K562 (cell line): ENCODE measurements at regions of chr5 and their contacts with region 1.

Region 1: DNA sequence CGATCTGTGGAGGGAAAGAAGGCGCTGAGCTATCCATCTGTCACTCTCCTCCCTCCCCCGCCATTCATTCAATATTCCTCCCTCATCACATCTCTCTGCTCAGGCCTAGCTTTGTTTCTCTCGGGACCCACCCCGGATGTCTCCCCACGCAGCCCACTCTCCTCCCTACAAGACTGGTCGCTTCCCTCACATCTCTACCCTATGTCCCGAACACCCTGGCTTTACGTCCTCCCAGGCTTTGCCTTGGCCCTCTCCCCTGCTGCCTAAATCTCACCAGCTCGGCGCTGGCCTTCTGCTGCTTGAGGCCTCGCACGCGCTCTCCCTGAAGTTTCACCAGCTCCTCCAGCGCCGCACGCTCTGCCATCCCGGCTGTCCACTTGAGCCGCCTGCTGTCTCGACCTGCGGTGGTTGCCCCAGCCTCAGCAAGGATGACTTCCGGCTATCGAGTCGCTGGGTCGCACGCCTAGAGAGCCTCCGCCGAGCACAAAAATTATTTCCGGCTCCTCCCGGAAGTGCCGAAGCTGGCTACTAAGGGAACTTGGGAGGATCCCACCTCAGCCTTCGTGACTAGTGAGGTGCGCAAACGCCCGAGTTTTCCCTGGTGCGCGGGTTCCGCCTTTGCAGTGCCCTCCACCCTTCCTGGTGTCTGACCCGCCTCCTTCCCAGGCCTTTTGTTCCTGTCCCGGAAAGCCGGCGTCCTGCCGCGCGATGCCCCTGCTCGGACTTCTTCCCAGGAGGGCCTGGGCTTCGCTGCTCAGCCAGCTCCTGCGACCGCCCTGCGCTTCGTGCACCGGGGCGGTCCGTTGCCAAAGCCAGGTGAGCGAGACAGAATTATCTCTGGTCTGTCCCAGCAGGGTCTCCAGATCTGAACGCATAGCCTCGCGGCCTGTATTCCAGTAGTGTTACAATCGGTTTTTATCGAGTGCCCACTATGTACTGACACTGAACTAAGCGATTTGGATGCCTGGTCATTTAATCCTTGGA is at the starts of genes HARS1 and HARS2:
- DNase-seq: peak; percentile 86 to 95 (median 90)
- ATAC-seq: peak; percentile 98
- H3K4me3 ChIP-seq: peak within 1 kb of the TSS; percentile 68
- H3K27ac ChIP-seq: peak within 1 kb of the TSS; percentile 80
- H3K4me1 ChIP-seq: peaks cover 5 to 14% of the 10 kb centered on the region in 2 experiments; a peak in 3 of 5 replicates
- H3K27me3 ChIP-seq: no peaks in the 10 kb centered on the region
- CTCF ChIP-seq: no peak
- EP300 ChIP-seq: peak; percentile 51; the same call in 1 of the 2 replicates
- POLR2A ChIP-seq: peak; percentile 98
- RAD21 ChIP-seq: peak; percentile 9 to 10; a peak in 1 of 4 replicates
- polyA plus RNA-seq, gene HARS1: 13.5 to 19.1 TPM
- polyA plus RNA-seq, gene HARS2: 8.5 to 18.0 TPM

Region 2: GRCh38 chr5:140664359-140665119 is 26.7 kb before region 1 on chr5 and contains the start of gene WDR55:
- CTCF ChIA-PET with region 1: no interaction called
- POLR2A ChIA-PET with region 1: interaction called, 6 read pairs
- in situ Hi-C with region 1: no loop called
- intact Hi-C with region 1: loop called (anchors 2 kb)
- DNase-seq: peak; percentile 92 to 98 (median 94)
- ATAC-seq: peak; percentile 98
- H3K4me3 ChIP-seq: peak within 1 kb of the TSS; percentile 92
- H3K27ac ChIP-seq: peak within 1 kb of the TSS; percentile 91
- H3K4me1 ChIP-seq: peaks cover 10 to 14% of the 10 kb centered on the region in 2 experiments; a peak in 4 of 5 replicates
- H3K27me3 ChIP-seq: no peaks in the 10 kb centered on the region
- CTCF ChIP-seq: 0 out of 6 replicates have a peak, but pooled peaks of 1 of the 3 experiments have one; percentile 5
- EP300 ChIP-seq: 0 out of 2 replicates have a peak, but pooled peaks have one; percentile 3
- POLR2A ChIP-seq: peak; percentile 92
- RAD21 ChIP-seq: peak; percentile 6 to 9; a peak in 1 of 4 replicates
- polyA plus RNA-seq, gene WDR55: 5.2 to 6.6 TPM

Region 3: DNA sequence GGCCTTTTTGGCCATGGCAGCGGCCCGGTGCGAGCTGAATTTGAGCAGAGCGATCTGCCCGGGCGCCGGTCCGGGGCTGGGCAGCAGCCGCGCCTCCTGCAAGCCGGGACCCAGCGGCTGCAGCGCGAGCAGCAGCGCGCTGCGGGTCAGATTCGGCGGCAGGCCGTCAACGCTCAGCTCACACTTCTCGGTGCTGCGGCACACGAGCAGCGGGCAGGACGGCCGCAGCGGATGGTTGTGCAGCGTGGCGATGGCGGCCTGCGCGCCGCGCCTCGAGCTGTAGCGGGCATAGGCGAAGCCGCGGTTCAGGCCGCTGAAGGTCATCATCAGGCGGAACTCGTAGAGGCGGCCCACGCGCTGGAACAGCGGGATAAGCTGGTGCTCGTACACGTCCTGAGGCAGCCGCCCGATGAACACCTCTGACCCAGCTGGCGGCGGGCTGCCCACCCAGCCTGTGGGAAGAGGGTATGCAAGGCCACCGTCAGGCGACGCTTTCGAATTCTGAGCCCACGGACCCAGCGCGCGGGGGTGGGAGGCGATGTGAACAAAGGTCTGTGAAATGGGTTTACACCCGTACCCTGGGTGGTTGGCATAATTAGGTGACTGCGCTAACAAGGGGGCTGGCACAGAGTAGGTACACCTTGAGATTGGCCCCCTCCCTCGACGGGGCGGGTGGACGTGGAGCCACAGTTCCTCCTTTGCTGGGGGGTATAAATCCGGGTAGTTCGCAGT is 18.6 kb before region 1 on chr5:
- CTCF ChIA-PET with region 1: no interaction called
- POLR2A ChIA-PET with region 1: interaction called, 12 read pairs
- in situ Hi-C with region 1: no loop called
- intact Hi-C with region 1: no loop called
- DNase-seq: peak in 1 of 4 experiments; percentile 27
- ATAC-seq: peak; percentile 4; the same call in 2 of the 3 replicates
- H3K4me3 ChIP-seq: no peak overlapping the region
- H3K27ac ChIP-seq: no peak overlapping the region
- H3K4me1 ChIP-seq: peaks cover 0 to 16% of the 10 kb centered on the region in 2 experiments; a peak in 3 of 5 replicates
- H3K27me3 ChIP-seq: no peaks in the 10 kb centered on the region
- CTCF ChIP-seq: no peak
- EP300 ChIP-seq: no peak
- POLR2A ChIP-seq: no peak
- RAD21 ChIP-seq: no peak

Region 4: GRCh38 chr5:140677947-140678346 is 13.3 kb before region 1 on chr5:
- CTCF ChIA-PET with region 1: no interaction called
- POLR2A ChIA-PET with region 1: interaction called, 19 read pairs
- in situ Hi-C with region 1: no loop called
- intact Hi-C with region 1: no loop called
- DNase-seq: no peak
- ATAC-seq: no peak
- H3K4me3 ChIP-seq: no peak overlapping the region
- H3K27ac ChIP-seq: no peak overlapping the region; the same call in 2 of the 3 replicates
- H3K4me1 ChIP-seq: peaks cover 13 to 14% of the 10 kb centered on the region in 2 experiments; a peak in 4 of 5 replicates
- H3K27me3 ChIP-seq: no peaks in the 10 kb centered on the region
- CTCF ChIP-seq: no peak
- EP300 ChIP-seq: no peak
- POLR2A ChIP-seq: no peak
- RAD21 ChIP-seq: no peak